ENCODE measurements at regions of chr11 and their contacts with region 1.

Region 1: GRCh38 chr11:121591405-121592033 is 138.8 kb upstream of the SORL1-AS1 start:
- DNase-seq: no peak
- ATAC-seq: peak; percentile 85

Region 2: GRCh38 chr11:121249039-121249663 is 342.4 kb before region 1 on chr11:
- intact Hi-C with region 1: loop called (anchors 5 kb)
- DNase-seq: no peak
- ATAC-seq: peak; percentile 70

Region 3: DNA sequence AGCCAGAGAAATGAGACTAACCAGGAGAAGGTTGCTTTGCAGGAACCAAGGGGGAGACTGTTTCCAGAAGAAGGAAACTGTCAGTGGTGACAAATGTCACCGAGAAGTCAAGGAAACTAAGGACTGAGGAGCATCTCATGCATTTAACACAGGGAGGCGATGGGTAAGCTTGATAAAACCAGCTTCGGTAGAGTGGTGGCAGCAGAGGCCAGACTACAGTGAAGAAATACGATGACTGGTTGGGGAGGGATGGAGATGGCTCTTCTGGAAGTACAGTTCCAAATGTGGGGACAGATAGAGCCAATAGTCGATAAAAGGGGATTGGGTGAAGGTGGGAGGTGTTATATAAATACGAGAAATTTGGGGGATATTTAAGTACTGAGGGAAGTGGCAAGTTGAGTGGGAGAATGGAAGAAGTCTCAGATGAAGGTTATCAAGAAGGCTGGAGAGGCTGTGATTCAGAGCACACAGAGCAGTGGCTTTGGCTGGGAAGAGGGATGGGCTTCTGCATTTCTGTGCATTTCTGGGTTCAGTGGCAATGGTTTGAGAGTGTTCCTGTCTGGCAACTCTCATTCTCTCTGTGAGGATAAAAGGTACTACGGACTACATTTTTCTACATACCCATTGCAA is 269.8 kb before region 1 on chr11:
- intact Hi-C with region 1: loop called (anchors 2 kb)
- DNase-seq: no peak
- ATAC-seq: peak; percentile 87

Region 4: GRCh38 chr11:121790430-121790829 is 198.9 kb after region 1 on chr11:
- intact Hi-C with region 1: no loop called
- DNase-seq: no peak
- ATAC-seq: no peak

Measured in Right ventricle myocardium superior (tissue), 1 donor.